ENCODE measurements at regions of chr3 and their contacts with region 1.

Region 1: GRCh38 chr3:96480881-96481280 is 333.5 kb upstream of the EPHA6 start:
- DNase-seq: no peak
- ATAC-seq: no peak
- H3K4me3 ChIP-seq: no peak overlapping the region
- H3K27ac ChIP-seq: no peak overlapping the region
- H3K4me1 ChIP-seq: peaks cover 20% of the 10 kb centered on the region
- H3K27me3 ChIP-seq: no peaks in the 10 kb centered on the region
- CTCF ChIP-seq: no peak

Region 2: GRCh38 chr3:96225494-96225893 is 255.4 kb before region 1 on chr3:
- CTCF ChIA-PET with region 1: no interaction called
- POLR2A ChIA-PET with region 1: no interaction called
- intact Hi-C with region 1: no loop called
- DNase-seq: no peak
- ATAC-seq: no peak
- H3K4me3 ChIP-seq: no peak overlapping the region
- H3K27ac ChIP-seq: no peak overlapping the region
- H3K4me1 ChIP-seq: peaks cover 7% of the 10 kb centered on the region
- H3K27me3 ChIP-seq: no peaks in the 10 kb centered on the region
- CTCF ChIP-seq: no peak

Region 3: GRCh38 chr3:96347289-96347688 is 133.6 kb before region 1 on chr3:
- CTCF ChIA-PET with region 1: no interaction called
- POLR2A ChIA-PET with region 1: no interaction called
- intact Hi-C with region 1: loop called (anchors 5 kb)
- DNase-seq: peak; percentile 64
- ATAC-seq: peak; percentile 83
- H3K4me3 ChIP-seq: no peak overlapping the region
- H3K27ac ChIP-seq: no peak overlapping the region
- H3K4me1 ChIP-seq: peaks cover 11% of the 10 kb centered on the region
- H3K27me3 ChIP-seq: no peaks in the 10 kb centered on the region
- CTCF ChIP-seq: no peak

Region 4: GRCh38 chr3:96430079-96430478 is 50.8 kb before region 1 on chr3:
- CTCF ChIA-PET with region 1: no interaction called
- POLR2A ChIA-PET with region 1: no interaction called
- intact Hi-C with region 1: no loop called
- DNase-seq: peak; percentile 54
- ATAC-seq: peak; percentile 68
- H3K4me3 ChIP-seq: no peak overlapping the region
- H3K27ac ChIP-seq: no peak overlapping the region
- H3K4me1 ChIP-seq: no peaks in the 10 kb centered on the region
- H3K27me3 ChIP-seq: no peaks in the 10 kb centered on the region
- CTCF ChIP-seq: no peak

Region 5: DNA sequence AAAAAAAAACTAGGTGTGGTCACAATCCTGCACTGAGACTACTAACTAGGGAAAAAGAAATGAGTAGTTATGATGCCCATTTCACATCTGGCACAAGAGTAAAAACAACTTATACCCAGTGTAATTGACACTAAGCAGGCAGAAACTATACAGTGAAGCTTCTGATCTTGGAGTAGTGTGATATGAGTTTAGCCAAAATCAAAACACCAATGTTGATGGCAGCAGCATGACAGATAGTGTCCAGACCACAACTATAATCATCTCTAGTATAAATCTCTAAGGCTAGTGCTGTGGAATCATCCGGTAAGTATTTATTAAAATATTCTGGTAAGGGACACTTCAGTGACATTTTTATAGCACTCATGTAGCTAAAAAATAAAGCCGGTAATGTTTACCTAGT is 225.0 kb after region 1 on chr3:
- CTCF ChIA-PET with region 1: no interaction called
- POLR2A ChIA-PET with region 1: no interaction called
- intact Hi-C with region 1: loop called (anchors 5 kb)
- DNase-seq: peak; percentile 4
- ATAC-seq: peak; percentile 29
- H3K4me3 ChIP-seq: 0 out of 2 replicates have a peak overlapping the region, but pooled peaks have one; percentile 4
- H3K27ac ChIP-seq: peak overlapping the region; percentile 77
- H3K4me1 ChIP-seq: peaks cover 25% of the 10 kb centered on the region
- H3K27me3 ChIP-seq: no peaks in the 10 kb centered on the region
- CTCF ChIP-seq: no peak

Measured in PC-3 (cell line).